ENCODE measurements at regions of chr1 and their contacts with region 1.

Region 1: DNA sequence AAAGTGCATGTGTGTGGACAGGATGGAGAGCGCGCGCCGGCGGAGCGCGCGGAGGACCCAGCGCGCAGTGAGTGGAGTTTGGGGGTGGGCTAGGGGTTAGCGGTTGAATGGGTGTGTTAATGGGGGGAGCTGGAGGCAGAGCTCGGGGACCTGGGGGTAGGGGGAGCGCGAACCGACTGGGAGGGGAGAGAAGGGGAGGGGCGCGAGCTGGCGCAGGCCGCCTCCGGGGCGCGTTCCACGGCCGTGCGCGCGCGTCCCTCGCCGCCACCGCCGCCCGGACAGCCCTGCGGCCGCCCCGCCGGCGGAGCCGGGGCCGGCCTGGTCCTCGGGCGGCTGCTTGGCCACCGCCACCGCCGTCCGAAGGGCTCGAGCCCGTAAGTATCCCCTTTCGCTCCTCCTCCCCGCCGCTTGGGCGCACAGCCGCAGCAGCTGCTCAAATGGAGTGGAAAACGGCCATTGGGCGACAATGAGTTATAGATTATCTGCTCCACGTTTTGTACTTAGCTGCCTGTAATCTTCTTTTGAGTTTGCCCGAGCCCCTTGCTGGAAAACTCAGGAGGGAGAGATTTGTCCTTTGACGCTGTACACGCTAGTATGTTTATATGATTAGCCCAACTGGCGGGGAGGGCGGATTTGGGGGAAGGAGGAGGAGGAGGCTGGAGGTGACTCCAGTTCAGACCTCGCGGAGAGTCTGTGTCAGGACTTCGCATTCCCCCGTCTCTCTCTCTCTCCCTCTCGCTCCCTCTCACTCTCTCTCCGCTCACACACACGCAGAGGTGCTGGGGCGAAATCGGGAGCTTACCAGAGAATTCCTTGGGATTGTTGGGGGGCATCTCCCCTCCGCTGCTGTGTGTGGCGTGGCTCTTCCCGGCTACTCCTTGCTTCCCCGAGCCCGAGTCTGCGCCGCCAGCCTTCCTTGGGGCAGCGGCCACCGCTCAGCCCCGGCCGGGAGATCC is at the start of gene ADGRL2:
- DNase-seq: peak; percentile 78
- ATAC-seq: peak; percentile 91
- total RNA-seq, gene ADGRL2: 42.2 TPM

Region 2: GRCh38 chr1:81305997-81306452 is 494.9 kb before region 1 on chr1:
- intact Hi-C with region 1: loop called (anchors 5 kb)
- DNase-seq: no peak
- ATAC-seq: peak; percentile 84

Region 3: DNA sequence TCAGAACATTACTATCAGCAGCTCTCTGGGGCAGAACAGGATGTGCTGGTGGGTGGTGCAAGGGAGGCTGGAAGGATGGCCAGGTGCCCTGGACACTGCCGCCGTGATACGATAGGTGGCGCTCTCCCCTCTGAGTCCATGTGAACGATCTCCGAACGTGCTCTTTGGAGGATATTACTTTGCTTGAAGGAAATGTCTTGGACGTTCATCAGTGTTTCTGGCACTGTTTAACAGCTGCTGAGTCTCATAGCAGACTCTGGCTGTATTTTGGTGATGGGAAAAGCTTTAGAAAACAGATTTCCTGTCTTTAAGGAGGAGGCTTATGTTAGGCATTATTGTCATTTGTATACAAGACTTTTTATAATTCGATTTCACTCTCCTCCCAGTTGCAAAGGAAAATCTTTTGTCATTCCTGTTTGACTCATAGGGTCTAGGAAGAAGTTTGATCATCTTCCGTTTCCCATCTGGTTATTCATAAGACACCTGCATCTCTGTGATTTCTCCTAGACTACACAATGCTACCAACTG is 386.4 kb before region 1 on chr1:
- intact Hi-C with region 1: loop called (anchors 5 kb)
- DNase-seq: peak; percentile 88
- ATAC-seq: peak; percentile 89

Region 4: DNA sequence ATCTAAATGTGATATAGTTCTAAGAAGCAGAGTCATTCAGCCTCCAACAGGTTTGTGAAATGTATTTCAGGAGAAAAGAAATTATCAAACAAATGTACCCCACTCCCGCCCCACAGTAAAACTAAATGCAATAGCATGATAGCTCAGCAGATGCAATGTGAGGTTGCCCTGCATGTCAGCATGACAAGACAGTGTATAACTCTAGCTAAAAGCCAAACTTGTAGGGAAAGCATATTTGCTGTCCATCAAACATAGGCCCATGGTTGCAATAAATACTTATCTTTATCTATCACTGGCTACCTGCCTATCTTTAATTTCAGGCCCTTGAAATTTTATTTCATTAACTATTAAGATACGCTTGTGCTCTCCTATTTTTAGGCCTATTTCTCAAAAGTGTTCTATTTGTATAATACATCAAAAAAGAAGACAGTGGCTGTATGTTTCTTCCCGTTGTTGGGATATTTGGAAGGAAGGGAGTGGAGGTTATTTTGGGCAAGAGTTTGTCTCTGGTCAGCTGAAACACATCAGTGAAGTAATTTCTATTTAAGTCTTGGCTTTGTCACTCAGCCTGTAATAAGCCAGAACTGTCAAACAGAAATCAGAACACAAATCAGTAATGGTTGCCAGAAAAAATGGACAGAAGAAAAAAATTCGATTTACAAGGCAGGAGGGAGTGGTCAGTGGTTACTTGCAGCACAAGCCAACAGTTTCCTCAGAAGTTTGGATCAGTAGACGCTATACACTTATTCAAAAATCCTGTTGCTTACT is 307.7 kb before region 1 on chr1:
- intact Hi-C with region 1: loop called (anchors 5 kb)
- DNase-seq: no peak
- ATAC-seq: peak; percentile 88

Region 5: GRCh38 chr1:81549604-81550127 is 251.3 kb before region 1 on chr1:
- intact Hi-C with region 1: loop called (anchors 2 kb)
- DNase-seq: no peak
- ATAC-seq: peak; percentile 60

Region 6: GRCh38 chr1:81702903-81703302 is 98.1 kb before region 1 on chr1:
- intact Hi-C with region 1: no loop called
- DNase-seq: no peak
- ATAC-seq: no peak

Region 7: GRCh38 chr1:81756872-81757271 is 44.1 kb before region 1 on chr1:
- intact Hi-C with region 1: no loop called
- DNase-seq: no peak
- ATAC-seq: no peak

Region 8: DNA sequence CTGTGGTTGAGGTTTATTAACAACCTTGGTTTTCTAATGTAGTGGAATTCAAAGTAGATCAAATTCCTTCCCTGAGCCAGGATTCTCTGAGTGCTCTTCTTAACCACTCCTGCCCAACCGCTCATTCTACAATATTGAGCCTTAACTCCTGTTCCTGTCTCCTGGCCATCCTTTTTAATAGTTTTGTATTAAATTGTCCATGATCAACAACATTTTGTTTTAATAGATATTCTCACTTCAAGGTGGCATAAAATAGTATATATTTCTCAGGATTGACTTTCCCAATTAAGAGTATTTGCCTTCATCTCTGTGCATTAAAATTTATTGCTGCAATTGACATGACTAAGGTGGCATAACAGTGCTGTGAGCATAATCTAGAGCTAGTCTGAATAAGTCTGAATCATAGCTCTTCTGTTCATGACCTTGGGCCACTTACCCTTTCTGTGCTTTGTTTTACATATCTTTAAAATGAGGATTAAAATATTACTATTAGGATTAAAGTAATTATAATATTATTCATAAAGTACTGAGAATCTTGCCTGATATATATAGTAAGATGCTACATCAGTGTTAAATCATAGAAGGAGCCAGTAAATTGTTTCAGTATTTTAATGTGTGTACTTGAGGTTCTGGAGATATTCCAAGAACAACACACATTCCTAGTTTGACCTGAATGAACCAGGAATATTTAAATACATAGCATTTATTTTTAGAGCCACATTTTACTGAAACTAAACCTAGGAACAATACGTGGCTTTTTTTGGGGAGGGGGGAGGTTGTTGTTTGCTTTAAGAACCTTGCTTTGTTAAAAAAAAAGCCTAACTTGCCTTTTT is 76.1 kb after region 1 on chr1:
- intact Hi-C with region 1: loop called (anchors 5 kb)
- DNase-seq: no peak
- ATAC-seq: no peak

Region 9: DNA sequence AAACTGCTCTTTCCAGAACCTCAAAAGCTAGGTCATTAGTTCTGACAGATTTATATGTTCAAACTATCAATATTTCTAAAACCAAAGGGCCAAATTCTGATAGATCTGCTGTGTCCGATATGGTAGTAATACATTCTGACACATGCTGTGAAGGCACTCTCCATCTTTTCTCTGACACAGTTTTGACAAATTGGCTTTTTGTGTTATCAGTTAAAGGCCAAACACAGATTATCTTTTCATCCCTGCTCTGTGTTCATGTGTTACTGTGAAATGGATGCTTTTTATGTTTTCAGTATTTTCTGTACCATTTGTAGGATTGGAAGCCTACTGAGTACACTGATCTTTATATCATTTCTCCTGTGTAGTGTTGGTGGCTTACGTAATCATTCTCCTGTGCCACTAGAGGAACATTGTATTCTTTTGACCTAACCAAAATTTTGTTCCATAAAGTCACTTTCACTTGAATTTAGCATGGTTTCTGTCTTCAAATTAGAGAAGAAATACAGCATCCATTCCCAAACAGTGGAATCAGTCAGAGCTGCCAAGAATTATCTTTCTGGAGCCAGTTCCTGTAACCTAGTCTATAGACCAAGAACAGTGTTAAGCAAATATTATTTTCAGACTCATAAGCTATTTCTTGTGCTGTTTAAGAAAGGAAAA is 136.9 kb after region 1 on chr1:
- intact Hi-C with region 1: loop called (anchors 5 kb)
- DNase-seq: no peak
- ATAC-seq: peak; percentile 86

Measured in Right ventricle myocardium inferior (tissue), 1 donor.